ENCODE measurements at regions of chr17 and their contacts with region 1.

Region 1: DNA sequence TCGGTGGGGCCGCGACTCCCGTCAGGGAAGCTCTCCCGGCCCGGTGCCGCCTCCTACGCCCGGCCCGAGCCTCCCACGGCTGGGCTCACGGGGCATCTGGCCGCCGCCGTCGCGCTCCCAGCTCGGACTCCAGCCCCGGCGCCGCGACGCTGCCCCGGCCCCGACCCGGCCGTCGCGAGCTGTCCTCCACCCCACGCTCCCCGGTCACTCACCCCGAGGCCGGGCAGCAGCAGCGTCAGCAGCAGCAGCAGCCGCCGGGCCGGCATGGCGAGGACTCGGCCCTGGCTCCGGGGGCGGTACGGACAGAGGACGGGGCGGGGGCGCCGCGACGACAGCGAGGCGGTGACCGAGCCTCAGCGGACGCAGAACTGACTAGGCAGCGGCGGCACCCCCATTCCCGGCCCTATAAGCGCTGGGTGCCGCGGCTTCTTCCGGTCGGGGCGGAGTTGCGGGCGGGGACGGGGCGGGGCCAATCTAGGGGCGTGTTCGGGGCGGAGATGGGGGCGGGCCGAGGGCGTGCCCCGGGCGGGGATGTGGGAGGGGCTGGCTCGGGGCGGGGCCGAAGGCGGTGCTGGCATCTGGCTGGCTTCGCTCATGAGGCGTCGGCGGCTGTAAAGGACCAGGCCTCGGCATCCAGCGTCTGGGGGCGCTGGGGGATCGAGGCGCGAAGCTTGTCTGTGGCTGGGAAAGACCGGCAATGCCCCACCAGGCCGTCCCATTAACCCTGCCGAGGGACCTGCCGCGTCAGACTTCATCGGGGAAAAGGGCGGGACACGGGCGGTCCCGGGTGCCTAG is at the start of gene ERN1:
- DNase-seq: peak; percentile 92
- H3K4me3 Mint-ChIP-seq: peak within 1 kb of the TSS; percentile 84
- H3K27ac Mint-ChIP-seq: peak within 1 kb of the TSS; percentile 91
- H3K4me1 Mint-ChIP-seq: peaks cover 53% of the 10 kb centered on the region
- H3K27me3 Mint-ChIP-seq: no peaks in the 10 kb centered on the region
- total RNA-seq, gene ERN1: 126 to 128 TPM

Region 2: GRCh38 chr17:63876855-63877254 is 253.1 kb before region 1 on chr17:
- CTCF ChIA-PET with region 1: no interaction called
- POLR2A ChIA-PET with region 1: no interaction called
- DNase-seq: no peak
- H3K4me3 Mint-ChIP-seq: no peak overlapping the region
- H3K27ac Mint-ChIP-seq: no peak overlapping the region
- H3K4me1 Mint-ChIP-seq: no peaks in the 10 kb centered on the region
- H3K27me3 Mint-ChIP-seq: peaks cover 6% of the 10 kb centered on the region

Region 3: DNA sequence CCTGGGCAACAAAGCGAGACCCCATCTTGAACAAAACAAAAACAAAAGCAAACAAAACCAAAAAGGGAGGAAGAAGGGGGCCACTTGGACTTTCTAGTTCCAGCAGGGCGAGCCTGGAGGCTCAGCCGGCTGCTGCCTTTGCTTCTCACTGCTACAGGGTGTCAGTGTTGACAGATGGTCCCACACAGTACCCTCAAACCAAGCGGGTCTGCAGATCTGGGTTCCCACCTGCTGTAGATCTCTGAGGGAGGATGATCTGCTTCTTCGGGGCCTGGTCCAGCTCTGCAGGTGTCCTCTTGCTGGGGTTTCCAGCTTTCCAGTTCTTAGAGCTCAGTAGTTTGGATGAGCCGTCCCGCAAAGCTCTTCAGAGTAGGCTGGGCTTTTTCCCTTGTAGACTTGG is 225.6 kb before region 1 on chr17:
- CTCF ChIA-PET with region 1: interaction called, 34 read pairs
- POLR2A ChIA-PET with region 1: interaction called, 3 read pairs
- DNase-seq: no peak
- H3K4me3 Mint-ChIP-seq: no peak overlapping the region
- H3K27ac Mint-ChIP-seq: no peak overlapping the region
- H3K4me1 Mint-ChIP-seq: peaks cover 9% of the 10 kb centered on the region
- H3K27me3 Mint-ChIP-seq: peaks cover 35% of the 10 kb centered on the region

Region 4: DNA sequence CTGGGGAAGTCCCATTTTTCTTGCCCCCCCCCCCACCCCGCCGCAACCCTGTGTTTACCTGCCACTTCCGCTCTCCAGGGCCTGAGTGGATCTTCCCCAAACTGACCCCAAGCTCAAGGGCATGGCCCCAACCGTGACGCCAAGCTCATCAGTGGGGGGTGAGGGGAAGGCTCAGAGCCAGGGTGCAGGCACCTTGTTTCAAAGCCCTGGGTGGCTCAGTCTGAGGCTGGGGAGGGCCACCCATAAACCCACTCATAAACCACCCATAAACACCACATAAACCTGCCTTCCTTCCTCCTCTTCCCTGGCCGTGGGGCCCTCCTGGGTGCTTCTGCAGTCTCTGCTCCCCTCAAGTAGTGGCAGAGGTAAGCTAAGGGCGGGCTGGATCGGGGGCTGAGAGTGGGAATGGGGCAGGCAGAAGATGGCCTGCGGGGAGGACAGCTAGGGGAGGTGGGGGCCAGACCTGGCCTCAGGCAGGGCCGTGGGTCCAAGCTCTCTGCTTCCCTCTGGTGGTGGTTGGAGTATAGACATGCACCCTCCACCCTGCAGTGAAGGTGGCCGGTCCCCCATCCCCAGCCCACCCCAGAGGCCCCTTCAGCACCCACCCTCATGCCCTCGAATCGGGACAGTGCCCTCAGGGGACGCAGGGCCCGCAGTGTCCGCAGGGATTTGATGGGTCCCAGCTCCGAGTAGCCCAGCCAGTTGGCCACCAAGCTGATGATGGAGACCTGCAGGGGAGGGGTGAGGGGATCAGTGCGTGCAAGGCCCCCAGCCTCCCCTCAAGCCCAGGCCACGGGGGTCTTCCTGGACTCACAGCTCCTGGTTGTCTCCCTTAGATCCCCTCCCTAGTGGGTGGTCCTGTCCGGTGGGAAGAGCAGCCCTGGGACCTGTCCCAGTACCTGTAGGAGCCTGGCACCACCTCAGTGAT is 183.3 kb before region 1 on chr17:
- CTCF ChIA-PET with region 1: interaction called, 15 read pairs
- POLR2A ChIA-PET with region 1: interaction called, 7 read pairs
- DNase-seq: peak; percentile 67
- H3K4me3 Mint-ChIP-seq: peak overlapping the region; percentile 37
- H3K27ac Mint-ChIP-seq: peak overlapping the region; percentile 71
- H3K4me1 Mint-ChIP-seq: peaks cover 22% of the 10 kb centered on the region
- H3K27me3 Mint-ChIP-seq: peaks cover 10% of the 10 kb centered on the region

Region 5: GRCh38 chr17:64041912-64042311 is 88.0 kb before region 1 on chr17:
- CTCF ChIA-PET with region 1: interaction called, 12 read pairs
- POLR2A ChIA-PET with region 1: interaction called, 4 read pairs
- DNase-seq: no peak
- H3K4me3 Mint-ChIP-seq: no peak overlapping the region
- H3K27ac Mint-ChIP-seq: no peak overlapping the region
- H3K4me1 Mint-ChIP-seq: peaks cover 33% of the 10 kb centered on the region
- H3K27me3 Mint-ChIP-seq: no peaks in the 10 kb centered on the region

Region 6: DNA sequence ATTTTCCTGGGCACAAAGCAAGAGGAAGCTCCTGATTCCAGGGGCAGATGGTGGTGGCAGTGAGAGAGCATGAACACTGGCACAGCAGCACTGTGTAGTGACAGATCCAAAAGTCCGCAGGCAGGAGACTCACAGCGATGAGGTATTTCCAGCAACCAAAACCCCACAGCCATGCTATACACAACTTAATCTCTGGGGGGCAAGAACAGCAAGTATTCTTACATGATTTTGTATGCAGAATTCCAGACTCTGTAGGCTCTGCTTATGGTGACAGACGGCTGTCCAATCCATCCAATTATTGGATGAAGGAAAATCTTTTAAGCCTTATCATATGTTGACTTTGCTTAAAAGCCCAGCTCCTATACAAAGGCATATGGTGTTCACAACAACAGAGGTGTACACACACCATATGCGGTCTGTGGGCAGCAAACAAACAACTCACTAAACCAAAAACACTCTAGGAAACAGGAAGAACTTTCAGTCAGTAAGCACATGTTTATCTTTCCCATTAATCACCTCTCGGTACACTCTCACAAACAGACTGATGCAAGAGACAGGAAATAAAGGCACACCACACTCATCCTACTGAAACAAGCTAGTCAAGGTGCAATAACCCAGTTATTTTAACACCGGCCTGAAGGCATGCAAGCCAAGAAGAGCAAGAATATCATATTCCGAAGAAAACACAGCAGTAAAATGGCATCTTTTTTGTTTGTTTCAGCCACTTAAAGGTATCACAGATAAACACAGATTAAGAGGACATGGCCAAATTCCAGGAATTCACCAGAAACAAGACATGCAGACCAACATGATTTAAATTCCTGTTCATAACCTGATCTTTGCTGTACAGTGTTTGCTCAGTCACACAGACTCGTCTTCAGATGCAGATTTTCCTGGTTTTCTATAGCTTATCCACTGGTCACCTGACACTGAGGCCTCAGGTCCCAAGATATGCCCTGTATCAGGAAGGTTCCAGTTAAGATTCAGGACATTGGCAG is 47.9 kb before region 1 on chr17:
- CTCF ChIA-PET with region 1: interaction called, 36 read pairs
- POLR2A ChIA-PET with region 1: interaction called, 69 read pairs
- DNase-seq: peak; percentile 84
- H3K4me3 Mint-ChIP-seq: peak overlapping the region; percentile 54
- H3K27ac Mint-ChIP-seq: no peak overlapping the region
- H3K4me1 Mint-ChIP-seq: peaks cover 31% of the 10 kb centered on the region
- H3K27me3 Mint-ChIP-seq: no peaks in the 10 kb centered on the region

Region 7: GRCh38 chr17:64145757-64146417 is 15.9 kb after region 1 on chr17:
- CTCF ChIA-PET with region 1: interaction called, 31 read pairs
- POLR2A ChIA-PET with region 1: interaction called, 67 read pairs
- DNase-seq: peak; percentile 96
- H3K4me3 Mint-ChIP-seq: no peak overlapping the region
- H3K27ac Mint-ChIP-seq: no peak overlapping the region
- H3K4me1 Mint-ChIP-seq: peaks cover 25% of the 10 kb centered on the region
- H3K27me3 Mint-ChIP-seq: no peaks in the 10 kb centered on the region

Region 8: DNA sequence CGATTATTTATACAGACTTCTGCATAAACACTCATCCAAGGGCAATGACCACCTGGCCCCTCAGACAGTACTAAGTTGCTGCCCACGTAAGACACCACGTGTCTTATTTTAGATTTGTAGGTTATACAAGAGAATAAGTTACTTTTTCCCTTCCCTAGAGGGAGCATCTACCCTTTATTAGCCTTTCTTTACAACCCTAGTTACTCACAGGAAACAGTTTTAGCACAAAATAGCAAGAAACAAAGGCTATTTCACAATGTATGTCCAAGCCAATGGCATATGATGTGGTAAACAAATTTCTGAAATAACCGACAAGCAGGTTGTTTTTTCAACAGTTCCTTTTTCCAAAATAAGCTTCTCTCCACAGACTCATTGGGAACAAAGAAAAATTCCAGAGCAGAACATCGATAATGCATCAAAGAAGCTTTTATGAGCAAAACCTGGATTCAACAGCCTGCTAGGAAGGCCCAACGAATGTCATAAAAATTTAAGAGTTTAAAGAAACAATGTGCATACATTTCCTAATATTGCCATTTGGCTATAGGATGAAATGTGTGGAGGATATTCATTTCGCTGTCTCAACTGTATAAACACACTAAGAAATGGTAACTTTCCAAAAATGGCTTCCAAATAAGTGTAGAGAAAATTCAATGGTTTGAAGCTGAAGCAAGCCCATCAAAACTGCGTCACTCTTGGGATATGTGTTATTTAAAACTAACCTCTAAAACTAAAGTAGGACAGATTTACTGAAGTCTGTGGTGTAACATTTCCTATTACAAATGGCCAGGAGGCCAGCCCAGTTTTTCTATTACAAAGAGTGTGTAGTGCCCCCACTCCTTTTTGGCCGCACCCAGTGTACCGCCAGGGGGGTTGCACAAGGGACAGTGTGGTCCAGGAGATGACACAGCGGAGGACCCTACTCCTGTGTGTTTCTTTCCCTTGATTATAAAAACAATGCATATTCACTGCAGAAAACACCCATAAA is 50.4 kb after region 1 on chr17:
- CTCF ChIA-PET with region 1: no interaction called
- POLR2A ChIA-PET with region 1: no interaction called
- DNase-seq: no peak
- H3K4me3 Mint-ChIP-seq: no peak overlapping the region
- H3K27ac Mint-ChIP-seq: no peak overlapping the region
- H3K4me1 Mint-ChIP-seq: peaks cover 18% of the 10 kb centered on the region
- H3K27me3 Mint-ChIP-seq: no peaks in the 10 kb centered on the region